ENCODE measurements at regions of chr7 and their contacts with region 1.

Region 1: GRCh38 chr7:37336259-37336658 is 112.4 kb downstream of the ELMO1 start:
- DNase-seq: peak; percentile 94
- ATAC-seq: peak; percentile 85
- H3K4me3 ChIP-seq: no peak overlapping the region; the same call in 1 of the 2 replicates
- H3K27ac ChIP-seq: peak overlapping the region; percentile 90
- H3K4me1 ChIP-seq: peaks cover 24% of the 10 kb centered on the region
- H3K27me3 ChIP-seq: no peaks in the 10 kb centered on the region
- CTCF ChIP-seq: no peak
- EP300 ChIP-seq: peak; percentile 80 to 82; a peak in 3 of 4 replicates
- POLR2A ChIP-seq: no peak
- RAD21 ChIP-seq: no peak; the same call in 1 of the 2 replicates

Region 2: GRCh38 chr7:37323966-37324365 is 12.3 kb before region 1 on chr7:
- CTCF ChIA-PET with region 1: interaction called, 10 read pairs
- POLR2A ChIA-PET with region 1: interaction called, 4 read pairs
- RAD21 ChIA-PET with region 1: no interaction called
- SMC1A ChIA-PET with region 1: interaction called, 8 read pairs
- in situ Hi-C with region 1: no loop called
- intact Hi-C with region 1: no loop called
- DNase-seq: no peak
- ATAC-seq: no peak
- H3K4me3 ChIP-seq: no peak overlapping the region
- H3K27ac ChIP-seq: no peak overlapping the region
- H3K4me1 ChIP-seq: peaks cover 13% of the 10 kb centered on the region
- H3K27me3 ChIP-seq: no peaks in the 10 kb centered on the region
- CTCF ChIP-seq: no peak
- EP300 ChIP-seq: no peak
- POLR2A ChIP-seq: no peak
- RAD21 ChIP-seq: no peak

Measured in GM12878 (cell line).